ENCODE measurements at regions of chr1 and their contacts with region 1.

Region 1: DNA sequence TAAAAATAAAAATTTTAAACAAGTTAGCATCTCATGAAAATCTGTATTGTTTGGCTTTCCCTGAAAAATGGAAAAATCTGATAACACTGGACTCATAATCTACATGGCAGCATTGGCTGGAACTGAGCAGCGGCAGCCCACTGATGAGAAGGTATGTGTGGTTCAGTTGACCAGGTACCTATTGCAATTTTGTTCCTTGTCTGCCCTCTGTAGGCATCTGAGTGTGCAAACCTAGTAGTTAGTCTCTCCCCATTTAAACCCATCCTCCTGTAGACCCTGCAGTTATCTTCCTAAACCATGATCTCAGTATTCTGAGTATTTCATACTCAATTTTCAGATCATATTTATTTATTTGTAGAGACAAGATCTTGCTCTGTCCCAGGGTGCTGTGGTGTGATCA is 59.4 kb upstream of the SERBP1 start:
- DNase-seq: no peak
- ATAC-seq: peak; percentile 79

Region 2: DNA sequence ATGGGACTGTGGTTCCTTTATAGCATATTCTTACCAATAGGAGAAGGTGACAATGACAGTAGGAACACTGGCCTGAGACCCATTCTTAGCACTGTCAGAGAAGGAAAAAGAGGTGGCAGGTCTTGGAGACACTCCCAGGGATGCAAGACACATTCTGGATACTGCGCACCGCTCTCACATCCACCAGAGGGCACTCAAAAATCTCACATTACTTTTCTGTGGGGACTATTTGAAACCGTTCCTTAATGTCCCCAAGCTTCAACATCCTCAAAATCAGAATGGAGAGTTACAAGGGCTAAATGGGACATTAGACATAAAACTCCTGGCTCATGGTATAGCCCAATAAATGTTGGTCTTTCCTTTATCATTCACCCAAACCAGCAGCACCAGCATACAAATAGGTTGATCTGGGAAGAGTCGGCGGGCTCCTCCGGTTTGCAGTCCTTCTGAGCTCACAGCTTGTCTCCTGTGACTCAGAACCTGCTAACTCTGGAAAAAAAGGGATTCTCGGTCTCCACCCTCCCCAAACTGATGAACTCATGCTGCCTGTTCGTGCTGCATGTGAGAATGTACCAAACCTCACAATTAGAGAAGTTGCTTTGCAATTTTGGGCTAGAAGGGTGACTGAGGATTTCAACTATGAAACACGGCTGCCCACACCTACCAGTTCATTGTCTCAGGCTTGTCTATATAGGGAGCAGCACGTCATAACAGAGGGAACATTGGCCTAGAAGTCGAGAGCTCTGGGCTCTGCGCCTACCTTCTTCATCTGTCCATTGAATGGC is 141.8 kb before region 1 on chr1:
- intact Hi-C with region 1: loop called (anchors 5 kb)
- DNase-seq: no peak
- ATAC-seq: peak; percentile 86

Measured in Right ventricle myocardium superior (tissue), 1 donor.